ENCODE measurements at regions of chr5 and their contacts with region 1.

Region 1: DNA sequence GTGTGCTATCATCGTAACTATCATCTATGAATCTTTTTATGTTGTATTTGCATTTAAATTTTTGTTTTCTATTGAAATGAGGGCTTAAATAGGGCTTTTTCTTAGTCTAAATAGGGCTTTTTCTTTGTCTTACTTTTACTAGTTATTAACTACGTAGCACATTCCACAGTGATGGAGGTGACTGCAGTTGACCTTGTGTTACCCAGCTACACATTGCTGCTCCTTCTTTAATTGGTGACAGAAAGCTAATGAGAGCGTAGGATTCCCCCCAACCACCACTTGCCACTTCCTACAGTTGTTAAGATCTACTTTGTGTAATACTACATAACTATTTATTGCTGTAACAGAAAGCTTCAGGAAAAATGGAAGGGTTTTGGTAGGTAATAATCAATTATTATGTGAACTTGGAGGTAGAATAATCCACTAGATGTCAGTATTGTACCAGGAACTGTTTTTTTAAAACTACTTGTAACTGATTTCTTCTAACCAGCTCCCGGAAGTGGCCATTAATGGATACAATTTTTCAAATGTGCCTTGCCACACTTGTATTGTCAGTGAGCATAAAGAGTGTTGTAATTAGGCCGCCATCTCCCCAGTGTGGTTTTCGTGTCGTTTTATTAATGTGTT is 18.0 kb downstream of the MTRR start:
- DNase-seq: peak; percentile 40 to 50
- ATAC-seq: peak; percentile 66 to 77; a peak in 4 of 6 replicates
- H3K4me3 ChIP-seq: no peak overlapping the region
- H3K27ac ChIP-seq: peak overlapping the region; percentile 30 to 42; a peak in 2 of 6 replicates
- H3K4me1 ChIP-seq: peaks cover 3% of the 10 kb centered on the region; the same call in 1 of the 3 replicates
- CTCF ChIP-seq: peak; percentile 66
- EP300 ChIP-seq: no peak
- POLR2A ChIP-seq: no peak
- RAD21 ChIP-seq: peak; percentile 46 to 69

Region 2: GRCh38 chr5:7871653-7872052 is 15.3 kb before region 1 on chr5:
- CTCF ChIA-PET with region 1: interaction called, 19 read pairs
- POLR2A ChIA-PET with region 1: interaction called, 3 read pairs
- DNase-seq: no peak
- ATAC-seq: no peak
- H3K4me3 ChIP-seq: no peak overlapping the region
- H3K27ac ChIP-seq: no peak overlapping the region
- H3K4me1 ChIP-seq: peaks cover 33% of the 10 kb centered on the region
- CTCF ChIP-seq: no peak
- EP300 ChIP-seq: no peak
- POLR2A ChIP-seq: no peak
- RAD21 ChIP-seq: no peak

Region 3: GRCh38 chr5:7897014-7897632 is 10.2 kb after region 1 on chr5:
- CTCF ChIA-PET with region 1: interaction called, 13 read pairs
- POLR2A ChIA-PET with region 1: no interaction called
- DNase-seq: peak; percentile 44 to 72
- ATAC-seq: peak; percentile 97 to 98
- H3K4me3 ChIP-seq: no peak overlapping the region
- H3K27ac ChIP-seq: no peak overlapping the region
- H3K4me1 ChIP-seq: no peaks in the 10 kb centered on the region
- CTCF ChIP-seq: 0 out of 3 replicates have a peak, but pooled peaks have one; percentile 30
- EP300 ChIP-seq: no peak
- POLR2A ChIP-seq: no peak
- RAD21 ChIP-seq: peak in 1 of 2 experiments; percentile 17; a peak in 1 of 5 replicates